Activated CD4-positive, alpha-beta memory T cell treated with anti-CD3 and anti-CD28 coated beads, Interleukin-2, amount 10 ng/mL, durations not matched to agents 7 days and 5 days (primary cell): ENCODE measurements at regions of chr20 and their contacts with region 1.

Region 1: GRCh38 chr20:45436732-45437391 is 20.9 kb downstream of the PIGT start:
- DNase-seq: peak; percentile 87
- H3K4me3 Mint-ChIP-seq: peak overlapping the region; percentile 77
- H3K27ac Mint-ChIP-seq: no peak overlapping the region
- H3K4me1 Mint-ChIP-seq: peaks cover 26% of the 10 kb centered on the region
- H3K27me3 Mint-ChIP-seq: no peaks in the 10 kb centered on the region

Region 2: DNA sequence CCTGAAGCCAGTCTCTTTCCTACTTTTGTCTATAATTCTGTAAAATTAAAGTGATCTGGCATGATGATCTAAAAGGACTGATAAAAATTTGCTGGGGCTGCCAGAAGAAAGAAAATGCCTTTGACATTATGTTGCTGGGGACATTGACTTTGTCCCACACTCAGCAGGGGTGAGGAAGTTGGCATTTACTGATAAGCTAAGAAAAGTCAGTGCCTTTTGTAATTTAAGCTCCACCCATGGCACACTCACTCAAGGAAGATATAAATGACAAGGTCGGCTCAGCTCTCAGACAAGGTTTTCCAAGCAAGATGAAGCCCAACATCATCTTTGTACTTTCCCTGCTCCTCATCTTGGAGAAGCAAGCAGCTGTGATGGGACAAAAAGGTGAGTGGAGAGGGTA is 230.1 kb before region 1 on chr20 and contains the start of gene SEMG1:
- CTCF ChIA-PET with region 1: no interaction called
- POLR2A ChIA-PET with region 1: no interaction called
- DNase-seq: no peak
- H3K4me3 Mint-ChIP-seq: no peak within 1 kb of the TSS
- H3K27ac Mint-ChIP-seq: no peak within 1 kb of the TSS
- H3K4me1 Mint-ChIP-seq: no peaks in the 10 kb centered on the region
- H3K27me3 Mint-ChIP-seq: peaks cover 27% of the 10 kb centered on the region
- total RNA-seq, gene SEMG1: not detected

Region 3: GRCh38 chr20:45229264-45230056 is 207.4 kb before region 1 on chr20:
- CTCF ChIA-PET with region 1: no interaction called
- POLR2A ChIA-PET with region 1: no interaction called
- DNase-seq: peak; percentile 61
- H3K4me3 Mint-ChIP-seq: no peak overlapping the region
- H3K27ac Mint-ChIP-seq: no peak overlapping the region
- H3K4me1 Mint-ChIP-seq: peaks cover 2% of the 10 kb centered on the region
- H3K27me3 Mint-ChIP-seq: peaks cover 47% of the 10 kb centered on the region

Region 4: GRCh38 chr20:45322952-45323383 is 113.9 kb before region 1 on chr20:
- CTCF ChIA-PET with region 1: interaction called, 60 read pairs
- POLR2A ChIA-PET with region 1: interaction called, 7 read pairs
- DNase-seq: no peak
- H3K4me3 Mint-ChIP-seq: no peak overlapping the region
- H3K27ac Mint-ChIP-seq: no peak overlapping the region
- H3K4me1 Mint-ChIP-seq: peaks cover 30% of the 10 kb centered on the region
- H3K27me3 Mint-ChIP-seq: no peaks in the 10 kb centered on the region

Region 5: DNA sequence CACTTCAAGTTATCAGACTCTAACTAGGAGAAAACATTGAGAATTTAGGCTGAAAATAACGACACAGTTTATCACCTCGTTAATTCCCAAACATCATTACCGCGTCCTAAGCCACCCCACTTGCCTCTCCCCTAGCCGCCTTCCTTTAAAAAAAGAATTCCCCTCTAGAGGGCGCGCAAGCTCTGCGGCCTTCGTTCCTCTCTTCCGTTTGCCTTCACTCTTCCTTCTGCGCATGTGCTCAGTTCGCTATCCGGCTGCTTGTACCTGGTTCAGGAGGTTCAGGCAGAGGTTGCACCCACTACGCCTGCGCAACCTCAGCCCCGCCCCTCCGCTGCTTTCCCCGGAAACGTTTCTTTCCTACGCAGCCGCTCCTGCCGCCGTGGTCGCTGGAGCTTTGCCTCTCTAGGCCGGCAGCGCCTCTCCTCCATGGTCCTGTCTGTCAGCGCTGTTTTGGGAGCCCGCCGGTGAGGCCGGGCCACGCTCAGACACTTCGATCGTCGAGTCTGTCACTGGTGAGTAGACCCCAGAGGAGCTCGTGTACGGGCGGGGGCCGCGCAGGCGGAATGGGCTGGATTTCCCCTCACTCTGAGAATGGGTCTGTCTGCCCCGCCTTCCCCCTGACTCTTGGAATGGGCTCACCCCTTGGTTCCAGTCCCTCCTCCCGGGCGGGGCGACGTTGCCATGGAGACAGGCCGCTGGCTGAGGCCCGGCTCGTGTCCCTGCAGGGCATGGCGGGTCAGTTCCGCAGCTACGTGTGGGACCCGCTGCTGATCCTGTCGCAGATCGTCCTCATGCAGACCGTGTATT is 73.9 kb before region 1 on chr20 and contains the start of gene SYS1:
- CTCF ChIA-PET with region 1: interaction called, 156 read pairs
- POLR2A ChIA-PET with region 1: interaction called, 20 read pairs
- DNase-seq: peak; percentile 98
- H3K4me3 Mint-ChIP-seq: peak within 1 kb of the TSS; percentile 92
- H3K27ac Mint-ChIP-seq: peak within 1 kb of the TSS; percentile 91
- H3K4me1 Mint-ChIP-seq: peaks cover 65% of the 10 kb centered on the region
- H3K27me3 Mint-ChIP-seq: no peaks in the 10 kb centered on the region
- total RNA-seq, gene SYS1: 22.1 to 24.2 TPM

Region 6: GRCh38 chr20:45373353-45374100 is 63.3 kb before region 1 on chr20:
- CTCF ChIA-PET with region 1: interaction called, 194 read pairs
- POLR2A ChIA-PET with region 1: interaction called, 30 read pairs
- DNase-seq: peak; percentile 89
- H3K4me3 Mint-ChIP-seq: peak overlapping the region; percentile 74
- H3K27ac Mint-ChIP-seq: peak overlapping the region; percentile 83
- H3K4me1 Mint-ChIP-seq: peaks cover 34% of the 10 kb centered on the region
- H3K27me3 Mint-ChIP-seq: no peaks in the 10 kb centered on the region

Region 7: DNA sequence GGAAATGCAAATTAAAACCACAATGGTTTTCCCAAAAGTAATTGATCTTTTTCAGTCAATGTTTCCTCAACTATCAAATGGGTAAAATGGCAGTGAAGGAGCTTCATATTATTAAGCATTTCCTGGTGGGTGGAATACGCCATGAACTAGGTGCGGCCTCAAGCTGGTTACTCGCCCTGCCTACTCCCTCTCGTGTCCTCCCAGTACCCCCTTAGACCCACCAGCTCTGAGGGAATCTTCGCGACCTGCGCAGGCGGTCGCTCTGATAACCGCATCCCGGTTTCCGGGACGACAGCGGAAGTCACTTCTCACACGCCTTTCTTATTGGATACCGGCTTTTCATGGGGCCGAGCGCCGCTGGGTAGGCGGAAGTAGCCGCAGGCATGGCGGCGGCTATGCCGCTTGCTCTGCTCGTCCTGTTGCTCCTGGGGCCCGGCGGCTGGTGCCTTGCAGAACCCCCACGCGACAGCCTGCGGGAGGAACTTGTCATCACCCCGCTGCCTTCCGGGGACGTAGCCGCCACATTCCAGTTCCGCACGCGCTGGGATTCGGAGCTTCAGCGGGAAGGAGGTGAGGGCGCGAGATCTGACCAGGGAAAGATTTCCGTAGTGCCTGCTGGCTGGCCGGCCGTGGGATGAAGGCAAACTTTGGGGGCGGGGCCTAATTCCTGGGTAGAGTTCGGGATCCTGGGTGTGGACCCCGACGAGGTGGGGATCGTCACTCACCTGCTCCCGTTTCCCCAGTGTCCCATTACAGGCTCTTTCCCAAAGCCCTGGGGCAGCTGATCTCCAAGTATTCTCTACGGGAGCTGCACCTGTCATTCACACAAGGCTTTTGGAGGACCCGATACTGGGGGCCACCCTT is 20.9 kb before region 1 on chr20 and contains the start of gene PIGT:
- CTCF ChIA-PET with region 1: interaction called, 30 read pairs
- POLR2A ChIA-PET with region 1: interaction called, 16 read pairs
- DNase-seq: peak; percentile 91
- H3K4me3 Mint-ChIP-seq: peak within 1 kb of the TSS; percentile 93
- H3K27ac Mint-ChIP-seq: peak within 1 kb of the TSS; percentile 91
- H3K4me1 Mint-ChIP-seq: peaks cover 49% of the 10 kb centered on the region
- H3K27me3 Mint-ChIP-seq: no peaks in the 10 kb centered on the region
- total RNA-seq, gene PIGT: 52.4 to 53.0 TPM

Region 8: DNA sequence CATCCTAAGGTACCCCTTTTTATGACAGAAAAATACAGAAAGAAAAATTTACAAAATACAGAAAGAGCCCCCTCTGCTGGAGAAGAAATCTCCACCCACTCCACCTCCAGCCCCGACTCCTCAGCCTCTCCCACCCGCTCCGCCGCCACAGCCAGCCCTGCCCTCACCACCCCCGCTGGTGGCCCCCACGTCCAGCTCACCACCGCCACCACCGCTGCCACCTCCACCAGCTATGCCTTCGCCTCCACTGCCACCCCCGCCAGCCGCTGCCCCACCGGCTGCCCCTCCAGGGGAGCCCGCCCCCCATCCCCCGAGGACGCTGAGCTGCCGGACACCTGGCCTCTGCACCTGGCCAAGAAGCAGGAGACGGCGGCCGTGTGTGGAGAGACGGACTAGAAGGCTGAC is 50.4 kb after region 1 on chr20:
- CTCF ChIA-PET with region 1: no interaction called
- POLR2A ChIA-PET with region 1: no interaction called
- DNase-seq: no peak
- H3K4me3 Mint-ChIP-seq: no peak overlapping the region
- H3K27ac Mint-ChIP-seq: no peak overlapping the region
- H3K4me1 Mint-ChIP-seq: no peaks in the 10 kb centered on the region
- H3K27me3 Mint-ChIP-seq: peaks cover 32% of the 10 kb centered on the region

Region 9: GRCh38 chr20:45672765-45673164 is 235.9 kb after region 1 on chr20:
- CTCF ChIA-PET with region 1: no interaction called
- POLR2A ChIA-PET with region 1: no interaction called
- DNase-seq: no peak
- H3K4me3 Mint-ChIP-seq: no peak overlapping the region
- H3K27ac Mint-ChIP-seq: no peak overlapping the region
- H3K4me1 Mint-ChIP-seq: no peaks in the 10 kb centered on the region
- H3K27me3 Mint-ChIP-seq: peaks cover 34% of the 10 kb centered on the region

Region 10: GRCh38 chr20:45771182-45771759 is 334.4 kb after region 1 on chr20:
- CTCF ChIA-PET with region 1: interaction called, 14 read pairs
- POLR2A ChIA-PET with region 1: no interaction called
- DNase-seq: peak; percentile 85
- H3K4me3 Mint-ChIP-seq: no peak overlapping the region
- H3K27ac Mint-ChIP-seq: no peak overlapping the region
- H3K4me1 Mint-ChIP-seq: peaks cover 5% of the 10 kb centered on the region
- H3K27me3 Mint-ChIP-seq: peaks cover 24% of the 10 kb centered on the region